Activated naive CD4-positive, alpha-beta T cell treated with anti-CD3 and anti-CD28 coated beads, Interleukin-2, amount 10 ng/mL, durations not matched to agents 7 days and 5 days (primary cell): ENCODE measurements at regions of chr9 and their contacts with region 1.

Region 1: GRCh38 chr9:97598461-97599288 is 34.5 kb downstream of the TSTD2 start:
- DNase-seq: peak; percentile 83
- H3K4me3 Mint-ChIP-seq: no peak overlapping the region
- H3K27ac Mint-ChIP-seq: no peak overlapping the region
- H3K4me1 Mint-ChIP-seq: peaks cover 8% of the 10 kb centered on the region
- H3K27me3 Mint-ChIP-seq: no peaks in the 10 kb centered on the region

Region 2: DNA sequence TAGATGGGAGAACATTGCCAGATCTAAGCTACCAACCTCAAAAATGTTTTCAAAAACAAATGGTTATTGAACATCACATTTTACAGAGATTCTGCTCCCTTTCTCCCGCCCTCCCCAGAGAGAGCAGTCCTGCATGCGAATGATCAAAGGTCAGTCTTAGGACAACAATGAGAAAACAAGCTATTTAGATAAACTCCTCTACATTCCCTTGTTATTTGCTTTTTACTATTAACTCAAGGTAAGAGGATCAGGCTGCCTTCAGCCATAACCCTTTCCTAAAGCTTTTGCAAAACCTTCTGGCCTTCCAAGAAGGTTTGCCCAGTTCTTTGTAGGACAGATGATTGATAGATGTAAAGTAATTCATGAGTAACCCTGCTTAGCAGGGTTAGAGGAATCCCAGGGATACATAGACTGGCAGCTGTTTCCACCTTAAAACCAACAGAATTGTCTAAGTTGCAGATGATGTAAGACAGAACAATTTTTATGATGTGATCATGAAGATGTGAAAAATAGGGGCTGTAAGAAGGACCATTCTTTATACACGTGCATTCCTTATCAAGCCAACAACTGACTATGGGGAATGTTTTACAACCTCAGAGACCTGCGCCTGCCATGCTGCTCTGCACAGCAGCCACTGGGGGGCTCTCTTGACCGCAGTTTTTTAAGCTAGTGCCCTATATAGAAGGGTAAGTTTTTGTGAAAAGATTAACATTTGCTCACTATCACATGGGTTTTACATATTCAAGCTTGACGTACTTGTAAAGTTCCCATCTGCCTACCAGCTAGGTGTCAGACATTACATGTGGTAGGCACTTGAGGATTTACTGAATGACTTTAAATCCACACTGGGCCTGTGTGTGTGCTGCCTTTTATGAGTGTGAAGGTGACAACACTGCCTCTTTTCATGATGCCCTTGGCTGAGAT is 742.0 kb before region 1 on chr9:
- CTCF ChIA-PET with region 1: interaction called, 24 read pairs
- DNase-seq: peak; percentile 81
- H3K4me3 Mint-ChIP-seq: no peak overlapping the region
- H3K27ac Mint-ChIP-seq: no peak overlapping the region
- H3K4me1 Mint-ChIP-seq: peaks cover 28% of the 10 kb centered on the region
- H3K27me3 Mint-ChIP-seq: peaks cover 19% of the 10 kb centered on the region

Region 3: GRCh38 chr9:97096793-97097192 is 501.9 kb before region 1 on chr9:
- CTCF ChIA-PET with region 1: no interaction called
- DNase-seq: no peak
- H3K4me3 Mint-ChIP-seq: no peak overlapping the region
- H3K27ac Mint-ChIP-seq: no peak overlapping the region
- H3K4me1 Mint-ChIP-seq: no peaks in the 10 kb centered on the region
- H3K27me3 Mint-ChIP-seq: peaks cover 7% of the 10 kb centered on the region

Region 4: GRCh38 chr9:97411789-97412625 is 186.7 kb before region 1 on chr9 and contains the start of gene TDRD7:
- CTCF ChIA-PET with region 1: interaction called, 17 read pairs
- DNase-seq: peak; percentile 90
- H3K4me3 Mint-ChIP-seq: peak within 1 kb of the TSS; percentile 84
- H3K27ac Mint-ChIP-seq: peak within 1 kb of the TSS; percentile 76
- H3K4me1 Mint-ChIP-seq: peaks cover 33% of the 10 kb centered on the region
- H3K27me3 Mint-ChIP-seq: peaks cover 31% of the 10 kb centered on the region

Region 5: DNA sequence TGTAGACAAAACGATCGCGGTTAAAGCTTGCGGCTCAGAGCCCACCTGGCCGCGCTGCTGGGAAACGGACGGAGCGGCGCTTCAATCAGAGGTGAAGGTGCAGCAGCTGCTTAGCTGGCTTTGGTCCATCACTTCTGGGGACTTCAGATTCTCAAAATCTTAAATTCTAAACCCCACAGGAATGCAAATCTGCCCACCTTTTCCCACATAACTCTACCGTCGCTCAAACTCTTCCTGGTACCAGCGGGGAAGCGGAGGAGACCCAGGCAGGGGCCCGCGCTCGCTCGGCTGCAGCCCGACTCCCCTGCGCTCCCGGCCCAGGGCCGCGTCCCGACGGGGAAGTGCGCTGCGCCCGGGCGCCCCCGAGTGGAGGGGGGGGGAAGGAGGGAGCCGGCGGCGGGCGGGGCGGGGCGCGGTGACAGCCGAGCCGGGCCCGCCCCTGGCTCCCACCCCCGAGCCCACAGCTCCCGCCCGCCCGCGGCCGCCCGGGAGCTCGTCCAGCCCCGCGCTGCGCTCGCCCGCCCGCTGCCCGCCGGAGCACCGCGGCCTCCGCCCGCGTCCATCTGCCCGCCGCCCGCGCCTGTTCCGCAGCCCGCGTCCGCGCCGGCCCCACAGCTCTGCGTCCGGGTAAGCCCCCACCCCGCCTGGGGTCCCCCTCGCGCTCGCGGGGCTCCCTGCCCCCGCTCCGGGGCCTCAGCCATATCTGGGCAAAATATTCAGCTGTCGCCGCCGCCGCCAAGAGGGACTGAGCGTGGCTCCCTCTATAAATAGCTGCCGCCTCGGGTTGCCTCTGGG is 97.3 kb before region 1 on chr9 and contains the start of gene TMOD1:
- CTCF ChIA-PET with region 1: interaction called, 18 read pairs
- DNase-seq: peak; percentile 58
- H3K4me3 Mint-ChIP-seq: peak within 1 kb of the TSS; percentile 65
- H3K27ac Mint-ChIP-seq: no peak within 1 kb of the TSS
- H3K4me1 Mint-ChIP-seq: peaks cover 20% of the 10 kb centered on the region
- H3K27me3 Mint-ChIP-seq: peaks cover 62% of the 10 kb centered on the region

Region 6: GRCh38 chr9:97567182-97567893 is 31.3 kb before region 1 on chr9:
- CTCF ChIA-PET with region 1: interaction called, 11 read pairs
- DNase-seq: no peak
- H3K4me3 Mint-ChIP-seq: no peak overlapping the region
- H3K27ac Mint-ChIP-seq: no peak overlapping the region
- H3K4me1 Mint-ChIP-seq: no peaks in the 10 kb centered on the region
- H3K27me3 Mint-ChIP-seq: peaks cover 21% of the 10 kb centered on the region

Region 7: DNA sequence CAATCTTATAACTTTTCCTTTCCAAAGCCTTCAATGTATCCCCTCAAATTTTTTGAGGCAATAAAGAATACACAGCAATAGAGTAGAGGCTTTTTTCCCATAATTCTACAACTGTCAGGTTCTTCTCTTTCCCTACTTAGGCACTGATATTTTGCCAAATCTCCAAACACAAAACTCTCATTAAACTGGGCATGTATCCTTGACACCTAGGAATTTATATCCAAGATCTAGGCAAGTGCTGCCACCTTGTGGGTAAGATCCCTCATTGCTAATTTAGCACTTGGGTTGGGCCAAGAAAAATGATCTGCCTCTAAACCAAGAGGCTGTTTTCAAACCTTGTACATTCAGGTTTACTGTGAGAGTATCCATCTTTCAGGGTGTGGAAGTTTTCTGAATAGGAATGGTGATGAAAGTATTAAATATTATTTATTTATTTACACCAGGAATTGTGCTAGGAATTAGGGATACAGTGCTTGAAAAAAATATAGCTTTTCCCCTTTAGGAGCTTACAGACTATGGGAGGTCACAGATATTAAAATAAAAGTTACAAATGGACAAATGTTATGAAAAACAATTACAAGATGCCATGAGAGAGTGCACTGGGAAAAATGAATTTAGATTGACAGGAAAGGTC is 16.9 kb after region 1 on chr9:
- CTCF ChIA-PET with region 1: interaction called, 38 read pairs
- DNase-seq: peak; percentile 77
- H3K4me3 Mint-ChIP-seq: no peak overlapping the region
- H3K27ac Mint-ChIP-seq: no peak overlapping the region
- H3K4me1 Mint-ChIP-seq: peaks cover 7% of the 10 kb centered on the region
- H3K27me3 Mint-ChIP-seq: no peaks in the 10 kb centered on the region